BJ (cell line): ENCODE measurements at regions of chr11 and their contacts with region 1.

Region 1: DNA sequence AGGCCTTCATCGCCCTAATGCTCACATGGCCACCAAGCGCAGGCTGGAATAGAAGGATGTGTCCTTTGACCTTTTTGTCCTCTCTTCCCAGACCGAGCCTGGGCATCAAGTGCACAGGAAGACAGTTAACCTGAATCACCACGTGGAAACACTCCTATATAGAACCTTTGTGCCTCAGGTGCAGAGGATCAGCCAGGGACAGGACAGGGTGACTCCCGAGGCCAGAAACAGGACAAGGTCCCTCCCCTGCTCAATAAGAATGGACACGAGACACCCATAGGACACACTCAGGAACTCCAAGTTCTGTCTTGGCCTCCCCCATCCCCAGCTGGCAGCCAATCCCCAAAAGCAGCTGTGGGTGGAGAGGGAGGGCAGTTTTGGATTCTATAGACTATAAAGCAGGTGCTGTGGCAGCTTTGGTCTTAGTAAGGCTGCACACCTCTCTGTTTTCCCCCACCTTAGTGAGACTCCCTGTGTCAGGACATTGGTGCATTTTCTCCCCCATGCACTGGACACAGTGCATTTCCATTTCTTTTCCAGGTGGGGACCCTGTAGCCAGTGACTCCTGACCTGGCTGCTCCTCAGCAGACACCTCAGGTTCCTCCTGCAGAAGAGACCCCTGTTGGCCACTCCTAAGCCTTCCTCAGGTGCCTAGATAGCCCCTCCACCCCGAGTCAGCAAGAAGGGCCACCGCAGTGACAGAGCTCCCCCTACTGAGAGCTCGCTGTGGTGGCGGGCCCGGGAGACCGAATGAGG is 43.6 kb upstream of the POU2AF1 start:
- DNase-seq: no peak
- H3K4me3 ChIP-seq: no peak overlapping the region
- H3K27me3 ChIP-seq: peaks cover 3% of the 10 kb centered on the region
- CTCF ChIP-seq: peak; percentile 80

Region 2: GRCh38 chr11:111283945-111284481 is 138.7 kb before region 1 on chr11:
- CTCF ChIA-PET with region 1: interaction called, 231 read pairs
- POLR2A ChIA-PET with region 1: no interaction called
- DNase-seq: peak; percentile 70
- H3K4me3 ChIP-seq: no peak overlapping the region
- H3K27me3 ChIP-seq: peaks cover 8% of the 10 kb centered on the region; the same call in 1 of the 2 replicates
- CTCF ChIP-seq: no peak

Region 3: GRCh38 chr11:111299101-111300026 is 123.3 kb before region 1 on chr11:
- CTCF ChIA-PET with region 1: interaction called, 20 read pairs
- POLR2A ChIA-PET with region 1: no interaction called
- DNase-seq: no peak
- H3K4me3 ChIP-seq: peak overlapping the region; percentile 45
- H3K27me3 ChIP-seq: peaks cover 35% of the 10 kb centered on the region
- CTCF ChIP-seq: peak; percentile 62

Region 4: GRCh38 chr11:111441443-111441842 is 18.8 kb after region 1 on chr11:
- CTCF ChIA-PET with region 1: interaction called, 54 read pairs
- POLR2A ChIA-PET with region 1: no interaction called
- DNase-seq: peak; percentile 97
- H3K4me3 ChIP-seq: no peak overlapping the region
- H3K27me3 ChIP-seq: no peaks in the 10 kb centered on the region
- CTCF ChIP-seq: no peak

Region 5: GRCh38 chr11:111446404-111447111 is 23.9 kb after region 1 on chr11:
- CTCF ChIA-PET with region 1: interaction called, 54 read pairs
- POLR2A ChIA-PET with region 1: no interaction called
- DNase-seq: no peak
- H3K4me3 ChIP-seq: no peak overlapping the region
- H3K27me3 ChIP-seq: no peaks in the 10 kb centered on the region; the same call in 1 of the 2 replicates
- CTCF ChIP-seq: peak; percentile 91

Region 6: DNA sequence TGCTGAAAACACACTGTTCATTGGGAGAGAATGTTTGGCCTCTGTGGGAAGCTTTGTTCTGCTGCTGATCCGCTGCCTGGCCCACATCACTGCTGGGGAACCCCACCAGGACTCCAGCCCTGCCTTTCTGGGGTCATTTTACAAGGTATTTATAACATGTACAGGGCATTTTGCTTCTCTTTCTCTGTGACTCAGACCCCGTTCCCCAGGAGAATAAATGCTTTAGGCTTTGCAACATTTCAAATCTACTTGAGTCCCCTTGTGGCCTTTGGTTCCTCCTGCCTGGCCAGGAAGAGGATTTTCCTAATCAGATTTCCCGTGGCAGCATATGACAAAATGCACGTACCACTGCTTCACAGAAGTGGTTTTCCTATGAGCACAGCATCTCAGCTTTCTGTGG is 46.5 kb after region 1 on chr11:
- CTCF ChIA-PET with region 1: no interaction called
- POLR2A ChIA-PET with region 1: no interaction called
- DNase-seq: no peak
- H3K4me3 ChIP-seq: no peak overlapping the region
- H3K27me3 ChIP-seq: no peaks in the 10 kb centered on the region
- CTCF ChIP-seq: no peak